ENCODE measurements at regions of chr9 and their contacts with region 1.

Region 1: DNA sequence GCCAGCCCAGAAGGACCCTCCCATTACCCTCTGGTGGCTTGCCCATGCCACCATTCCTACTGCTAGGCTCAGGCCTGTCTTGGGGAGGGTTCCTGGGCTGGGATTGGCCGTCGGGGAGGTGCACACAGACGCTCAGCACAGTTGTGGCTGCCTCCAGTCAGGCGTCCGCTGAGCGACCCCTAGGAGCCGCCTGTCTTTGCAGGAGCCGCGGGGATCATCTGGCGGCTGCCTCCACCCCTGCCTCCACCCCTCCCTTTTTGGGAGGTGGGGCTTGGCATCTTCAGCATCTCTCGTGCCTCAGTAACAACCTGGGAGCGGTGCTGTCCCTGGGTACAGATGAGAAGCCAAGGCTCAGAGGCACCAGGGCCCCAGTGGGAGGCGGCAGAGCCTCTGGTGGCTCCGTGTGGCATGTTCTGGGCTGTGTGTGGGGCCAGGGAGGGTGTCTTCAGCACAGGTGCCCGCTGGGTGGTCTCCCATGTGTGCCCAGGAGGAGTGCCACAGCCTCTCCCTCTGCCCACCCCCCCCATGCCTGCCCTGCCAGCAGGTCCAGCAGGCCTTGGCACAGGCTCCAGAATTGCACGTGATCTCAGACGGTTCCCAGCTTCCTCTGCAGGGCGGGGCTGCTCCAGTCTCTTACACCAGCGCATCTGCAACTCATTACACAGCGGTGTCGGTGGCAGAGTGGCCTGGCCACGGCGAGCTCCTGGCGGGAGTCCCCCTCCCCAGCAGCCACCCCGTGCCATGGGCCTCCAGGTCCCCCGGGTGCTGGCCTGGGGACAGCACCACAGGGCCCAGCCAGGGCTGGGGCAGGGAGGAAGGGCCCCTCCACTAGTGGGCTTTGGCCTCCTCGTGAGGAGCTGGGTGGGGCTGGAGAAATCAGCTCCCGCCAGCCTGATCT is 39.8 kb downstream of the RXRA start:
- DNase-seq: peak; percentile 98
- H3K4me3 ChIP-seq: peak overlapping the region in 3 of 4 donors; percentile 8 to 30 (median 27)
- H3K27ac ChIP-seq: peak overlapping the region; percentile 83 to 87 (median 84)
- H3K4me1 ChIP-seq: peaks cover 0 to 67% (median 62%) of the 10 kb centered on the region in 4 donors
- H3K27me3 ChIP-seq: no peaks in the 10 kb centered on the region
- CTCF ChIP-seq: peak in 1 of 4 experiments; percentile 13
- EP300 ChIP-seq: peak in 1 of 4 donors; percentile 33
- POLR2A ChIP-seq: peak; percentile 45 to 74

Region 2: GRCh38 chr9:134171316-134172197 is 194.5 kb before region 1 on chr9:
- intact Hi-C with region 1: loop called (anchors 5 kb)
- DNase-seq: peak; percentile 84
- H3K4me3 ChIP-seq: no peak overlapping the region
- H3K27ac ChIP-seq: peak overlapping the region in 3 of 4 donors; percentile 58 to 67 (median 63)
- H3K4me1 ChIP-seq: peaks cover 0 to 41% (median 30%) of the 10 kb centered on the region in 4 donors
- H3K27me3 ChIP-seq: peaks cover 13 to 32% (median 14%) of the 10 kb centered on the region in 3 donors
- CTCF ChIP-seq: no peak
- EP300 ChIP-seq: no peak
- POLR2A ChIP-seq: no peak

Region 3: GRCh38 chr9:134413890-134414731 is 48.1 kb after region 1 on chr9:
- intact Hi-C with region 1: loop called (anchors 5 kb)
- DNase-seq: peak; percentile 96
- H3K4me3 ChIP-seq: no peak overlapping the region
- H3K27ac ChIP-seq: peak overlapping the region; percentile 70 to 78 (median 76)
- H3K4me1 ChIP-seq: peaks cover 0 to 80% (median 71%) of the 10 kb centered on the region in 4 donors
- H3K27me3 ChIP-seq: no peaks in the 10 kb centered on the region
- CTCF ChIP-seq: no peak
- EP300 ChIP-seq: peak in 2 of 4 donors; percentile 48 to 82
- POLR2A ChIP-seq: no peak

Region 4: GRCh38 chr9:134434894-134435506 is 69.0 kb after region 1 on chr9:
- intact Hi-C with region 1: loop called (anchors 2 kb)
- DNase-seq: peak; percentile 99
- H3K4me3 ChIP-seq: peak overlapping the region in 3 of 4 donors; percentile 14 to 24 (median 24)
- H3K27ac ChIP-seq: peak overlapping the region; percentile 87 to 93 (median 90)
- H3K4me1 ChIP-seq: peaks cover 0 to 77% (median 72%) of the 10 kb centered on the region in 4 donors
- H3K27me3 ChIP-seq: no peaks in the 10 kb centered on the region
- CTCF ChIP-seq: no peak
- EP300 ChIP-seq: peak in 2 of 4 donors; percentile 79 to 82
- POLR2A ChIP-seq: no peak

Region 5: DNA sequence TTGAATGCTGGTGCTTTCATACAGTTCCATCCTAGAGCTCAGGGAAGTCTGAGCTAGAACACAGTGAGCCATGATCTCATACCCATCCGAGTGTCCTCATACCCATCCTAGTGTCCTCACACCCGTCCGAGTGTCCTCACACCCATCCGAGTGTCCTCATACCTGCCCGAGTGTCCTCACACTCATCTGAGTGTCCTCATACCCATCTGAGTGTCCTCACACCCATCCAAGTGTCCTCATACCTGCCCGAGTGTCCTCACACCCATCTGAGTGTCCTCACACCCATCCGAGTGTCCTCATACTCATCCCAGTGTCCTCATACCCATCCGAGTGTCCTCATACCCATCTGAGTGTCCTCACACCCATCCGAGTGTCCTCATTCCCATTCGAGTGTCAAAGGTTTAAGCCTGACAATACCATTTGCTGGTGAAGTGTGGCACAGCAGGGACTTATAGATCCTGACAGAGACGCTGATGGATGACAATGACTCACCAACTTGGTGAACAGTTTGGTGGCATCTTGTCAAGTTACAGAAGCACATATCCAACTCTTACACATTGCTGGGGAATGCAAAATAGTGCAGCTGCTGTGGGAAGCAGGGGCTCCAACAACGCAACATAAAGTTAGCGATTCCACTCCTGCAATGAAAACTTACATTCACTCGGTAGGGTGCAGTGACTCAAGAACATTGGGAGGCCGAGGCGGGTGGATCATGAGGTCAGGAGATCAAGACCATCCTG is 198.6 kb after region 1 on chr9:
- intact Hi-C with region 1: no loop called
- DNase-seq: peak; percentile 40
- H3K4me3 ChIP-seq: no peak overlapping the region
- H3K27ac ChIP-seq: no peak overlapping the region
- H3K4me1 ChIP-seq: no peaks in the 10 kb centered on the region
- H3K27me3 ChIP-seq: no peaks in the 10 kb centered on the region
- CTCF ChIP-seq: no peak
- EP300 ChIP-seq: no peak
- POLR2A ChIP-seq: no peak

Measured in sigmoid colon (tissue), 7 donors.